Dendritic cell treated with granulocyte-macrophage colony-stimulating factor and Interleukin-4, amounts not matched to agents 40 ng/mL and 50 ng/mL, for 4 days (primary cell): ENCODE measurements at regions of chr2 and their contacts with region 1.

Region 1: DNA sequence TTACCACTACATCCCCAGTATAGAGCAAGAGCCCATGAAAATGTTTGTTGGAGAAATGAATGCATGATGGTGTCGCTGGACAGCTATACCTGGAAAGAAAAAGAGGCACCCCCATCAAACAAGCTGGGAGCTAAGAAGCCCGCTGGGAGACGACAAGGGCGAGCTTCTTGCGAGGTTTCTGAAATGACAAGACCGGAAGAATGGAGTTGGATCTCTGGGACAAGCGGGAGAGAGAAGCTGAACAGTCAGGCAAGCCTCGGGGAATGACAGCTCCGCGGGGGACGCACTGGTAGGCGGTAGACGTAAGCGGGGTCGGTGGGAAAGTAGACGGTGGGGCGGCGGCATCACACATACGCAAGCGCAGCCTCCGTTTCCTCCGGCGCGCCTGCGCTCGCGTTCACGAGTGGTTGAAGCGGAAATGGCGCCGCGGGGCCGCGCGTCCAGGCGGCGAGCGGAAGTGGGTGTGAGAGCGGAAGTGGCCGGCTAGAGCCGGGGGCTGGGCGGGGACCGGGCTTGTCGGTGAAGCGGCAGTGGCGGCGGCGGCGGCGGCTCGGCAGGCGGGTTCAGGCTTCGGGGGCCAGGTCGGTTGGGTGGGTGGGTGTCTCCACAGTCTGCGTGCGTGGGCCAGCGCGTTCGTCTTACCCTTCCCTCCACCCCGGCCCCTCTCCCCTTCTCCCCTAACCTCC is at the start of gene ARPC2:
- H3K4me3 Mint-ChIP-seq: peak within 1 kb of the TSS; percentile 95
- H3K27ac Mint-ChIP-seq: peak within 1 kb of the TSS; percentile 99
- H3K4me1 Mint-ChIP-seq: peaks cover 49% of the 10 kb centered on the region
- H3K27me3 Mint-ChIP-seq: no peaks in the 10 kb centered on the region

Region 2: DNA sequence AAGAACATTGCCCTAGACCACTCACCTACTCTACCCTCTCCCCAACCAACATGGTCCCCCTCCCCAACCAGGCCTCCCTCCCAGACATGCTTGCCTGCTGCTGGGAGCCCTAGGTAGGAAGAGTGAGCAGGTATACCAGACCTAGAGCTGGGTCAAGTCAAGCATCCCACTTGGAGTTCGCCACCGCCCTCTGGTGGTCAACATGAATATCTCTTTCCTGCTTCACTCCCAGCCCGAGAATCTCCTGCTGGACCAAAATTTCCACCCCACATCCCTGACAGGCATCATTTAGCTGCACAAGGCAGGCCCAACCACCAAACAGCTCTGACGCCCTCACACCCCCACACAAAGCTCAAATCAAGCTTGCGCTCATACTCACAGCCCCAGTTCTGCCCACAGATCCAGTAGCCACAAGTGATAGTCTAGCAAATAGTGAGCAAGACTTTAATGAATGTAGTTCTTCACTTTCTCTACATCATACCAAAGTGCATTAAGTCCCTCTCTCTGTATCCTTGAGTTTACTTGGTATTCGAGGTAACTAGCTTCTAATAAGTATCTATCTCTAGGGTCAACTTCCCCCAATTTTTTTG is 330.0 kb before region 1 on chr2:
- intact Hi-C with region 1: no loop called
- H3K4me3 Mint-ChIP-seq: no peak overlapping the region
- H3K27ac Mint-ChIP-seq: no peak overlapping the region
- H3K4me1 Mint-ChIP-seq: peaks cover 24% of the 10 kb centered on the region
- H3K27me3 Mint-ChIP-seq: no peaks in the 10 kb centered on the region

Region 3: GRCh38 chr2:218229239-218229638 is 12.4 kb after region 1 on chr2:
- intact Hi-C with region 1: loop called (anchors 1 kb)
- H3K4me3 Mint-ChIP-seq: peak overlapping the region; percentile 40
- H3K27ac Mint-ChIP-seq: peak overlapping the region; percentile 48
- H3K4me1 Mint-ChIP-seq: peaks cover 73% of the 10 kb centered on the region
- H3K27me3 Mint-ChIP-seq: no peaks in the 10 kb centered on the region

Region 4: GRCh38 chr2:218257390-218257981 is 40.7 kb after region 1 on chr2:
- intact Hi-C with region 1: loop called (anchors 5 kb)
- H3K4me3 Mint-ChIP-seq: no peak overlapping the region
- H3K27ac Mint-ChIP-seq: peak overlapping the region; percentile 81
- H3K4me1 Mint-ChIP-seq: peaks cover 95% of the 10 kb centered on the region
- H3K27me3 Mint-ChIP-seq: no peaks in the 10 kb centered on the region